IMR-90 (cell line): ENCODE measurements at regions of chr2 and their contacts with region 1.

Region 1: DNA sequence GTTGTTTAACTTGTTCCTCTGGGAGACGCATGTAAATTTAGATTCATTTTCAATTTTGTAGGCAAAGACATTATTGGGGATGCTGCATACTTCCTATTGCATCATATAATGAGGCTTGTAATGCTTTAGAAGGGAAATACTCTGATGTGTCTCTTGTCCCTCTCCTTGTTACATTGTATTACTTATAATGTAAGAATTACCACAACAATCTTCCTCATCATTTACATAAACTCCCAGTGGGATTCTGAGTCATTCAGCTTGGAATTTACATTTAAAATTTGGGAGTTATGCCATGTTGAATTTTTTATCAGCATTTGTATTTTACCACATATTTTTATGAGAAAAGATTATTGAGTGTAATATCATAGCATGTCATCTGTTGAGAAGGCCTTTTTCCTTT is 963.4 kb upstream of the NRXN1 start:
- DNase-seq: peak; percentile 89
- ATAC-seq: peak; percentile 75
- H3K4me3 ChIP-seq: no peak overlapping the region
- H3K27ac ChIP-seq: peak overlapping the region; percentile 63; the same call in 1 of the 2 replicates
- H3K4me1 ChIP-seq: peaks cover 6% of the 10 kb centered on the region
- H3K27me3 ChIP-seq: no peaks in the 10 kb centered on the region
- CTCF ChIP-seq: no peak
- POLR2A ChIP-seq: no peak
- RAD21 ChIP-seq: no peak; the same call in 1 of the 2 replicates

Region 2: GRCh38 chr2:50529600-50530218 is 1465.6 kb before region 1 on chr2:
- CTCF ChIA-PET with region 1: no interaction called
- POLR2A ChIA-PET with region 1: no interaction called
- dilution Hi-C with region 1: no loop called
- in situ Hi-C with region 1: loop called (anchors 25 kb)
- intact Hi-C with region 1: no loop called
- DNase-seq: peak; percentile 71
- ATAC-seq: peak; percentile 92
- H3K4me3 ChIP-seq: no peak overlapping the region
- H3K27ac ChIP-seq: no peak overlapping the region
- H3K4me1 ChIP-seq: no peaks in the 10 kb centered on the region
- H3K27me3 ChIP-seq: no peaks in the 10 kb centered on the region
- CTCF ChIP-seq: peak; percentile 79
- POLR2A ChIP-seq: no peak
- RAD21 ChIP-seq: peak; percentile 79

Region 3: GRCh38 chr2:50556934-50557575 is 1438.2 kb before region 1 on chr2:
- CTCF ChIA-PET with region 1: no interaction called
- POLR2A ChIA-PET with region 1: no interaction called
- dilution Hi-C with region 1: no loop called
- in situ Hi-C with region 1: no loop called
- intact Hi-C with region 1: loop called (anchors 10 kb)
- DNase-seq: peak; percentile 90
- ATAC-seq: peak; percentile 94
- H3K4me3 ChIP-seq: no peak overlapping the region
- H3K27ac ChIP-seq: no peak overlapping the region
- H3K4me1 ChIP-seq: 0 out of 2 replicates have a peak, but pooled peaks cover 2% of the 10 kb centered on the region
- H3K27me3 ChIP-seq: no peaks in the 10 kb centered on the region
- CTCF ChIP-seq: no peak
- POLR2A ChIP-seq: no peak
- RAD21 ChIP-seq: no peak

Region 4: DNA sequence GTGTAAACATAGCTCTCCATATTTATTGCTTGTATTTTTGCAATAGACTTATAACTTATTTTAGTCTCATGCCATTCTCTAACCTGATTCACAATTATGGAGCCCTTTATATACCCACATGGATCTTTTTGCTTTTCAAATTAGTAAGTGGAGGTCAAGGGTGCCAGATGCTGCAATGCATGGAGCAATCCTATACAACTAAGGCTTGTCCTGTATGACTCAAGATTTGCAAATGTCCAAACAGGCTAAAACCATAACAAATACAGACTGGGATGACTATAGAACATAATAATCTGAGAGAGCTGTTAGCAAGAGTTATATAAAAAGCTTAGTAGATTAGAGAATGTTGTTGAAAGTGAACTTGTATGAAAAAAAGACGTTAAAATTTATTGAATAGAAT is 273.0 kb before region 1 on chr2:
- CTCF ChIA-PET with region 1: no interaction called
- POLR2A ChIA-PET with region 1: no interaction called
- dilution Hi-C with region 1: no loop called
- in situ Hi-C with region 1: no loop called
- intact Hi-C with region 1: loop called (anchors 5 kb)
- DNase-seq: peak; percentile 98
- ATAC-seq: peak; percentile 95
- H3K4me3 ChIP-seq: no peak overlapping the region
- H3K27ac ChIP-seq: no peak overlapping the region
- H3K4me1 ChIP-seq: peaks cover 3% of the 10 kb centered on the region
- H3K27me3 ChIP-seq: no peaks in the 10 kb centered on the region
- CTCF ChIP-seq: no peak
- POLR2A ChIP-seq: no peak
- RAD21 ChIP-seq: 0 out of 2 replicates have a peak, but pooled peaks have one; percentile 23

Region 5: DNA sequence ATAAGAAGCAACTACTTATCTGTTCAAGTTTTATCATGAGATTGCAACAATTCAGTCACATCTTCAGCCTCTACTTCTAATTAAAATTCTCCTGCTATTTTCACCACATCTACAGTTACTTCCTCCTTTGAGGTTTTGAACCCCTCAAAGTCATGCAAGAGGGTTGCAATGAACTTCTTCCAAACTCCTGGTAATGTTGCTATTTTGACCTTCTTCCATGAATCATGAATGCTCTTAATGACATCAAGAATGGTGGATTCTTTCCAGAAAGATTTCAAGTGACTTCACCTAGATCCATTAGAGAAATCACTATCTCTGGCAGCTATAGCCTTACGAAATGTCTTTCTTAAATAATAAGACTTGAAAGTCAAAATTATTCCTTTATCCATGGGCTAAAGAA is 89.5 kb after region 1 on chr2:
- CTCF ChIA-PET with region 1: no interaction called
- POLR2A ChIA-PET with region 1: no interaction called
- dilution Hi-C with region 1: no loop called
- in situ Hi-C with region 1: no loop called
- intact Hi-C with region 1: no loop called
- DNase-seq: peak; percentile 43
- ATAC-seq: no peak
- H3K4me3 ChIP-seq: no peak overlapping the region
- H3K27ac ChIP-seq: no peak overlapping the region
- H3K4me1 ChIP-seq: no peaks in the 10 kb centered on the region
- H3K27me3 ChIP-seq: no peaks in the 10 kb centered on the region
- CTCF ChIP-seq: no peak
- POLR2A ChIP-seq: no peak
- RAD21 ChIP-seq: no peak